ENCODE measurements at regions of chr17 and their contacts with region 1.

Region 1: DNA sequence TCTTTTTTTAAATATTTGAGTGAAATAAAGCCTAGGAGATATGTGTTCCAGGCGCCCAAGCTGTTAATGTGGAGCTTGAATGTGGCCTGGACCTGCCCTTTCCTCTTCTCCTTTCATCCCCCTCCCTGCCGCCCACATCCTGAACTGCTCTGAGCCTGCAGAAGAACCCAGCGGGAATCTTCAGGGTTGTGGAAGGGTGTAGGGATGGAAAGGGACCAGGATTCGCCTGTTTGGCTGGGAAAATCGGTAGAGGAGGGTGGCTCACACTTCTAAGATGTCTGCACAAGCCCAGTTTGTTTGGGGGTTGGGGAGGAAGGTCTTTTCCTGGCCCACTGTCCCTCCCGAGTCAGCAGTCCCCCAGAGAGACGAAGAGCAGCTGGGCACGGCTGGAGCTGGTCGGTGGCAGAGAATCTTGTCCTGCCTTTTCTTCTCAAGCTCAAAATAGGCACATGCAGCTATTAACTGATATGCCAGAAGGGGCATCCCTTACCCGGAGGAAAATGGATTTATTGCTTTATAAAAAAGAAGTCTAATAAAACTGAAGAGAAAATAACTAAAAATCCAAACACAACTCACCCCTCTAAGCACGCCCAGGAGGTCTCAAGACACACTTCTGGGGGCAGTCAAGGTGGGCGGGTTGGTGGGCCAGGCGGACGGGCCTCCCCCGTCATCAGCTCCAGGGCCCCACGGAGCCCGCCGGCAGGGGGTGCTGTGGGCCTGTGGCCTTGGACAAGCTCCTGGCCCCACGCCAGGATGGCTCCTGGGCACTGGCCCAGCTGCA is 11.5 kb upstream of the PITPNA start:
- DNase-seq: peak; percentile 67 to 83 (median 76)
- H3K4me3 ChIP-seq: no peak overlapping the region
- H3K27ac ChIP-seq: no peak overlapping the region
- H3K4me1 ChIP-seq: peaks cover 0 to 47% (median 44%) of the 10 kb centered on the region in 4 experiments
- H3K27me3 ChIP-seq: no peaks in the 10 kb centered on the region

Region 2: GRCh38 chr17:1516388-1517161 is 57.5 kb before region 1 on chr17 and contains the start of gene INPP5K:
- CTCF ChIA-PET with region 1: no interaction called
- POLR2A ChIA-PET with region 1: no interaction called
- DNase-seq: peak; percentile 98 to 99 (median 99)
- H3K4me3 ChIP-seq: peak within 1 kb of the TSS; percentile 89 to 99 (median 94)
- H3K27ac ChIP-seq: peak within 1 kb of the TSS; percentile 84 to 90
- H3K4me1 ChIP-seq: peaks cover 7 to 19% (median 18%) of the 10 kb centered on the region in 4 experiments
- H3K27me3 ChIP-seq: no peaks in the 10 kb centered on the region

Region 3: GRCh38 chr17:1590031-1590748 is 16.1 kb after region 1 on chr17:
- CTCF ChIA-PET with region 1: interaction called, 13 read pairs
- POLR2A ChIA-PET with region 1: interaction called, 10 read pairs
- DNase-seq: peak in 2 of 3 donors; percentile 41 to 48
- H3K4me3 ChIP-seq: no peak overlapping the region
- H3K27ac ChIP-seq: no peak overlapping the region
- H3K4me1 ChIP-seq: peaks cover 3 to 60% (median 51%) of the 10 kb centered on the region in 4 experiments
- H3K27me3 ChIP-seq: no peaks in the 10 kb centered on the region

Region 4: DNA sequence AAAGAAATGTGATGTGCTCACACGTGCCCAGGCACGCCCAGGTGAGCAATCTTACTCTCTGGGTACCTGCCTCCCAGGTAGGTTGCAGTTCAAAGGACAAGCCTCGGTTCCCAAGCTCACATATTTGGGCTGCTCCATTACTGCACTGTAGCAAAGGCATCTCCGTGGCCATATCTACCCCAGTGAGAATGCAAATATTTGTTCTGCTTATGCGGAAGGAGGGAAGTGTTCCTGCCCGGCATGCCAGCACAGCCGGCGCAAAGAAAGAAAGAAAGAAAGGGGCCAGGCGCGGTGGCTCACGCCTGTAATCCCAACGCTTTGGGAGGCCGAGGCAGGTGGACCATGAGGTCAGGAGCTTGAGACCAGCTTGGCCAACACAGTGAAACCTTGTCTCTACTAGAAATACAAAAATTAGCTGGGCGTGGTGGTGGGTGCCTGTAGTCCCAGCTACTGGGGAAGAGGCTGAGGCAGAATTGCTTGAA is 23.8 kb after region 1 on chr17:
- CTCF ChIA-PET with region 1: interaction called, 11 read pairs
- POLR2A ChIA-PET with region 1: interaction called, 10 read pairs
- DNase-seq: no peak
- H3K4me3 ChIP-seq: no peak overlapping the region
- H3K27ac ChIP-seq: no peak overlapping the region
- H3K4me1 ChIP-seq: peaks cover 3 to 20% (median 11%) of the 10 kb centered on the region in 4 experiments
- H3K27me3 ChIP-seq: no peaks in the 10 kb centered on the region

Region 5: DNA sequence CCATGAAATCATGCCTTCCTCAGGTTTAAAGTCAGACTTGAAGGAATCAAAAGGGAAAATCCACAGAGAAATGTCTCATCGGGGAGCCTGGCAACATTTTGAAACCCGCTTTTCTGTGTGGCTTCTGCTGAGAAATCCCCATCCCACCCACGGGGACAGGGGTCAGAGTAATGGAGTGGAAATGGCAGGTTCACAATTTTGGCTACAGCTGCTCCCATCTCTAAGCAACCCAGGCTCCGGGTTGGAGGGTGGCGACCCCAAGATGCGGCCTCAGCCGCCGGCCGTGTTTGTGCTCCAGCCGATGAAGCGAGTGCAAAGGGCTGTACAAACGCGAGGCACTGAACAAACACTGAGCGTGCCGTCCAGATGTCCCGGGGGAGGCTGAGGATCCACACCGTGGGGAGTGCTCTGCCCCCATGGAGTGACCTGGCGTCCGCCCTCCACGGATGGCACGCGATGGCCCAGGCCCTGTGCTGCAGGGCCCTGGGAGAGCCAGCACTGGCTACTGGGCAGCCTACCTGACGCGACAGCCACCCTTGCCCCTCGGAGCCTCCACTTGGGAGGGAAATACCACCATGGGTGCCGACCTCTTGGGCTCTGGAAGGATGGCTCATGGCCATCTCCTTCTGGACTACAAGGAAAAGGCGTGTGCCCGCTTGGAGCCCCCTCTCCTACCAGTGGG is 32.4 kb after region 1 on chr17:
- CTCF ChIA-PET with region 1: interaction called, 11 read pairs
- POLR2A ChIA-PET with region 1: interaction called, 3 read pairs
- DNase-seq: no peak
- H3K4me3 ChIP-seq: no peak overlapping the region
- H3K27ac ChIP-seq: no peak overlapping the region
- H3K4me1 ChIP-seq: peaks cover 5 to 41% (median 25%) of the 10 kb centered on the region in 4 experiments
- H3K27me3 ChIP-seq: no peaks in the 10 kb centered on the region

Region 6: GRCh38 chr17:1617620-1618174 is 43.6 kb after region 1 on chr17:
- CTCF ChIA-PET with region 1: interaction called, 16 read pairs
- POLR2A ChIA-PET with region 1: interaction called, 4 read pairs
- DNase-seq: peak; percentile 42 to 62 (median 55)
- H3K4me3 ChIP-seq: peak overlapping the region in 1 of 7 experiments; percentile 33
- H3K27ac ChIP-seq: no peak overlapping the region
- H3K4me1 ChIP-seq: peaks cover 0 to 8% (median 6%) of the 10 kb centered on the region in 4 experiments
- H3K27me3 ChIP-seq: no peaks in the 10 kb centered on the region

Region 7: DNA sequence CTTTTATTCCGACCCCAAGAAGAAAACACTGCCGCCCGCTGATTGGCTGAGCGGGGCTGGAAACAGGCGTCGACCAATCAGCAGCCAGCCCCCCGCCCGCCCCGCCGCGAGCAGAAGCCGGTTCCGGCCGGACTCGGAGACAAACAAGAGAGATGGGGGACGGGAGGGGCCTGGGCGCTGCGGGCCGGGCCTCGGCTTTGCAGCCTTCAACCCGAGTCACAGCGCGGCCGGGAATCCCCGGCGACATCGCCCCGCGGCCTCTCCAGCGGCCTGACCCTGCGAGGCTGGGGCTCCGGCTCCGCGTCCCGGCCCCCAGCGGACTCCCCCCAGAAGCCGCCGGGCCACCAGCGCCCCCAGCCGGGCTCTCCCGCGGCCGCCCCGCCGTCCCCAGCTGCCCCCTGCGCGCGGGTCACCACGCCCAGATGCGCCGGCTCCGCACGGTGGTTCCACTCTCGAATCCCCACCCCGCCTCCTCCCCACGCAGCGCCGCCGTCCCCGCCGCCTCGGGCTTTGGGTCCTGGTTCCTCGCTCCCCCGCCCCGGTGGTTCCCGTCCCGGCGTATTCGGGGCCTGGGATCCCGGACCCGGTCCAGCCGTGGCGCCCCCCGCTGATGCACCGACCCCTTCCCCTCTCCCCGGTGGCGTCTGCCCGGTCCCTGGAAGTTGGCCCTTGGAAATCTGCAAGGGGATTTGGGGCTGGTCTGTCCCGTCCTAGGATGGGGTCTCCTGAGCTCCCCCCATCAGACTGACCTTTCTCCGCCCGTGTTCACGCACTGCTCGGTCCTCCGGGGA is 54.9 kb after region 1 on chr17:
- CTCF ChIA-PET with region 1: interaction called, 225 read pairs
- POLR2A ChIA-PET with region 1: interaction called, 40 read pairs
- DNase-seq: peak; percentile 94 to 96 (median 94)
- H3K4me3 ChIP-seq: peak overlapping the region; percentile 32 to 96 (median 80)
- H3K27ac ChIP-seq: peak overlapping the region in 1 of 2 experiments; percentile 68
- H3K4me1 ChIP-seq: peaks cover 3 to 59% (median 50%) of the 10 kb centered on the region in 4 experiments
- H3K27me3 ChIP-seq: no peaks in the 10 kb centered on the region

Region 8: DNA sequence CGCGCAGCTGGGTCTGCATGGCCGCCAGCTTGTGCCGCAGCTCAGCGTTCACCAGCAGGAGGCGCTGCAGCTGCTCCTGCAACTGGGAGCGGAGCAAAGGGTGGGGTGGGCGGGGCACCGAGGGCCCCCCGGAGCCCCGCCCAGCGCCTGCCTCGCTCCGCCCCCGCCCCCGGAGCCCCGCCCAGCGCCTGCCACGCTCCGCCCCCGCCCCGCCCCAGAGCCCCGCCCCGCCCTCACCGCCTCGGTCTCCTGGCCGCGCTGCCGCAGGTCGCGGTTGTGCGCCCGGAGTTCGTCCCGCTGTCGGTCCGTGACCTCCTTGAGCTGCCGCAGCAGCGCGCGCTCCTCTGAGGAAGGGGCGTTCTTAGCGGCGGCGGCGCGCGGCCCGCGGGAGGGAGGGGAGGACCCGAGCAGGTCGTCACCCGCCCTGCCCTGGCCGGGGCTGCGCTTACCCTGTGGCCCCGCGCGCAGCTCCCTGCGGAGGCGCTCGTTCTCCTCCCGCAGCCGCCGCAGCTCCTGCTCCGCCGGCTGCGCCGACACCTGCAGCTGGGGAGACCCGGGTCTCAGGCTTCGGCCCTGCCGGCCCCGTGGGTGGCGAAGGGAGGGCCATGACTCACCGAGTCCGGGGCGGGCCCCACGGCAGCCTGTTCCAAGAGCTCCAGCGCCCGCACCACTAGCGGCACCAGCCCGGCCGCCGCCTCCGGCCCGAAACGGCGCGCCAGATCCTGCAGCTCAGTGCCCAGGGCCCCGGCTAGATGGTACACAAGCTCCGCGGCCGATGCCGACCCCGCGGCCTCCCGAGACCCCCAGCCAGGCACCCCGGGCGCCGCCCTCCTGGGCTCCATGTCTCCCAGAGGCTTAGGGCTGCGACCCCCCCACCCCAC is 75.1 kb after region 1 on chr17:
- CTCF ChIA-PET with region 1: interaction called, 58 read pairs
- POLR2A ChIA-PET with region 1: interaction called, 3 read pairs
- DNase-seq: peak; percentile 96 to 98 (median 96)
- H3K4me3 ChIP-seq: peak overlapping the region; percentile 56 to 83 (median 68)
- H3K27ac ChIP-seq: peak overlapping the region; percentile 50 to 73
- H3K4me1 ChIP-seq: peaks cover 0 to 59% (median 56%) of the 10 kb centered on the region in 4 experiments
- H3K27me3 ChIP-seq: no peaks in the 10 kb centered on the region

Region 9: GRCh38 chr17:1676401-1676800 is 102.3 kb after region 1 on chr17:
- CTCF ChIA-PET with region 1: no interaction called
- POLR2A ChIA-PET with region 1: no interaction called
- DNase-seq: no peak
- H3K4me3 ChIP-seq: no peak overlapping the region
- H3K27ac ChIP-seq: no peak overlapping the region
- H3K4me1 ChIP-seq: no peaks in the 10 kb centered on the region
- H3K27me3 ChIP-seq: no peaks in the 10 kb centered on the region

Region 10: GRCh38 chr17:1776328-1776727 is 202.2 kb after region 1 on chr17:
- CTCF ChIA-PET with region 1: no interaction called
- POLR2A ChIA-PET with region 1: no interaction called
- DNase-seq: no peak
- H3K4me3 ChIP-seq: no peak overlapping the region
- H3K27ac ChIP-seq: no peak overlapping the region
- H3K4me1 ChIP-seq: peaks cover 3 to 18% (median 11%) of the 10 kb centered on the region in 4 experiments
- H3K27me3 ChIP-seq: no peaks in the 10 kb centered on the region

Measured in common myeloid progenitor, CD34-positive (primary cell).